Panc1 (cell line): ENCODE measurements at regions of chr19 and their contacts with region 1.

Region 1: DNA sequence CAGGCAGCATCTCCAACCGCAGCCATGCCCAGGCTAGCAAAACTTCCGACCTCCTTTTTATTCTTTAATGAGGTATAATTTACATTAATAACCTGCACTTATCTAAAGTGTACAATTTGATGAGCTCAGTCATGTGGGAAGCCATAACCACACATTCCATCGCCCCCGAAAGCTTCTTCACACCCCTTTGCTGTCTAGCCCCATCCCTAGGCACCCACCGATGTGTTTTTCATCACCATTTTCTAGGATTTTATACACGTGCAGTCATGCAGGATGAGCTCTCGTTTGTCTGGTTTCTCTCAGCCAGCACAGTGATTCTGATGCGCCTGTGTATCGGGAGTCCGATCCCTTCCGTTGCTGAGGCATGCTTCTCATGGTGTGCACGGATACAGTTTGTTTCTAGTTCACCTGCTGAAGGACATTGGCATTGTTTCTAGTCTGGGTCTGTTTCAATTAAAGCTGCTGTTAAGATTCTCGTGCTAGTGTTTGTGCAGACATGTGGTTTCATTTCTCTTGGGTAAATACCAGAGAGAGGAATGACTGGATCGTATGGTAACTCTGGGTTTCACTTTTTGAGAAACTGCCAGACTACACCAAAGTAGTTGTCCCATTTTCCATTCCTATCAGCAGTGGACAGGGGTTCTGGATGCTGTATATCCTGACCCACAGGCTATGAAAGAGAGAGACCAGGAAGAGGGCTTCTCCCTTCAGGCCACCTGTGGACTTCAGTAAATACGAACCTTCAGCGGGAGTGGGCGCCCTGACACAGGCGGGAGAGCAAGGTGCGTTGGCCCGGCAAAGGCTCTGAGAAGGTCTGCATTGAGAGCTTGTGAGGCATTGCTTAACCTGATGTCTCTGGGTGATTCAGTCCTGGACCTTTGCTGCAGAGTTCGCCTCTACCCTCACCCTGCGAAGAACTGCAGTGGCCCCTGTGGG is 4.9 kb downstream of the AP1M1 start:
- DNase-seq: no peak
- ATAC-seq: no peak
- H3K4me3 ChIP-seq: no peak overlapping the region
- H3K27ac ChIP-seq: no peak overlapping the region
- H3K4me1 ChIP-seq: peaks cover 5% of the 10 kb centered on the region; the same call in 1 of the 2 replicates
- H3K27me3 ChIP-seq: no peaks in the 10 kb centered on the region
- CTCF ChIP-seq: no peak

Region 2: DNA sequence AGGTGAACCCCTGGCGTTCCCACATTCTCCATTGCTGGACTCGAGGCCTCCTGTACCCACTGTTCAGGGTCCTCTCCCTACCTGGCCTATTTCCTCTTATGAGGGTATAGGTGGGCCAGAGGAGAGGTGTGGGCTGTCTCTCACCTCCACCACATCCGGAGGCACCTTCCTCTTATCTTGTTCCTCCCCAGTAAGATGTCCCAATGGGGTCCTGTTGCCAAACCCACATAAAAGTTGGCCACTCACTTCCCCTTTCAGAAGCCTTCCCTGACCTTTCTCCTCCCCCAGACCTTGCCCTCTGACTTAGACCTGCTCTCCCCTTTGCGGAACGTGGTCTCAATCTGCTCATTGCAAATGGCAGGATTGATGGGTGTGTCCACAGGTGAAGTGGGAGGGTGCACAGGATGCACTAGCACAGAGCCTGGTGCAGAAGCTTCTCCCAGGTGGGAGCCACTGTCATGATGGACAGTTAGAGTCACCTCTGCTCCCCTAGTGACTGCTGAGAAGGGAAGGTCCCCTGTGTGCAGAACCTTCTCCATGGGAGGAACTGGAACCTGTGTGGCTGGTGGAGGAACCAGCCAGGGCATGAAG is 560.6 kb before region 1 on chr19:
- CTCF ChIA-PET with region 1: no interaction called
- POLR2A ChIA-PET with region 1: interaction called, 14 read pairs
- in situ Hi-C with region 1: no loop called
- intact Hi-C with region 1: no loop called
- DNase-seq: no peak
- ATAC-seq: no peak
- H3K4me3 ChIP-seq: no peak overlapping the region
- H3K27ac ChIP-seq: no peak overlapping the region
- H3K4me1 ChIP-seq: no peaks in the 10 kb centered on the region
- H3K27me3 ChIP-seq: no peaks in the 10 kb centered on the region
- CTCF ChIP-seq: no peak

Region 3: DNA sequence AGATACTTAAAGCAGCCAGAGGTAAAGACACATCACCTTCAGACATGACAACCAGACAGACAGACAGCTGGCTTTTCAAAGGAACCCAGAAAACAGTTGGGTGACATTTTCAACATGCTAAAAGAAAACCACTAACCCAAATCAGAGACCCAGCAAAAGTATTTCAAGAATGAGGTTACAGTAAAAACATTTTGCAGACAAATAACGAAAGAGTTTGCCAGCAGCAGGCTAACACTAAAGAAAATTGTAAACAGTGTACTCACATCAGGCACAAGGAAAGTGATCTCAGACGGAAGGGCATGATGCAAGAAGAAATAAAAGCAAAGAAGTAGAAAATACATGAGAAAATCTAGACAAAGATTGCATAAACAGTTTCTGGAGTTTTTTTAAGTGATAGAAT is 41.5 kb after region 1 on chr19:
- CTCF ChIA-PET with region 1: no interaction called
- POLR2A ChIA-PET with region 1: no interaction called
- in situ Hi-C with region 1: no loop called
- intact Hi-C with region 1: no loop called
- DNase-seq: no peak
- ATAC-seq: no peak
- H3K4me3 ChIP-seq: no peak overlapping the region
- H3K27ac ChIP-seq: no peak overlapping the region
- H3K4me1 ChIP-seq: no peaks in the 10 kb centered on the region
- H3K27me3 ChIP-seq: no peaks in the 10 kb centered on the region
- CTCF ChIP-seq: no peak